Cardiac septum (tissue), 1 donor: ENCODE measurements at regions of chr11 and their contacts with region 1.

Region 1: GRCh38 chr11:130478204-130478701 is 29.8 kb downstream of the ADAMTS15 start:
- DNase-seq: no peak

Region 2: DNA sequence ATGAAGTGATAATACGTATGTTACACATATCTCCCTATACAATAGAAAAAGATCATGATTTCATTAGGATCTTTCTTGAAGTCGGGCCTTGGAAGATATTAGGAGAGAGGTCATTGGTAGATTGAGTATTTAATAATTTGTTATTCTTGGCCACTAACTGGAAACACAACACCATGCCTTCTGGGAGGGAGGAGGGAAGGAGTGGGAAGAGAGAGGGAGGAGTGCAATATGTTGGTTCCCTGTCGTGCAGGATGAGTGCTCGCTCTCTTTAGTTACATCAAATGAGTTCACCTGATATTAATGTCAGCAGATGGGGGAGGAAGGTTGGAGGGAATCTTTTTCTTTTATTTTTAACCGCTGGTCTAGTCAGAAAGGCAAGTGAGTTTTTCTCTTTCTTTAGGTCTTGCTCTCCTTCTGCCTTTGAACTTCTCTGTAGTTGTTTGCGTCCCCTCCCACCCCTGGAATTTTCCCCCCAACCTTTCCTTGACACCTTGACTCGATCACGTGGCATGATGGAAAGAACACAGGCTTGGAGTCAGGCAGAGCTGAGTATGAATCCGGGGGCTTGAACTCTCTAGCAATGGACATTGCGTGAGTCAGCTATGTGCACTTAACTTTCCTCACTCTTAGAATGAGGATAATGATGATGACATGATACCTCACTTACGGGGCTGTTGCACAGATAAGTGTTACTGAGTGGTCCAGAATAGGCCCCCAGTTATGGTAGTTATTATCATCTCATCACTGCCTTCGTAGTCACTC is 23.6 kb before region 1 on chr11:
- intact Hi-C with region 1: loop called (anchors 2 kb)
- DNase-seq: no peak

Region 3: DNA sequence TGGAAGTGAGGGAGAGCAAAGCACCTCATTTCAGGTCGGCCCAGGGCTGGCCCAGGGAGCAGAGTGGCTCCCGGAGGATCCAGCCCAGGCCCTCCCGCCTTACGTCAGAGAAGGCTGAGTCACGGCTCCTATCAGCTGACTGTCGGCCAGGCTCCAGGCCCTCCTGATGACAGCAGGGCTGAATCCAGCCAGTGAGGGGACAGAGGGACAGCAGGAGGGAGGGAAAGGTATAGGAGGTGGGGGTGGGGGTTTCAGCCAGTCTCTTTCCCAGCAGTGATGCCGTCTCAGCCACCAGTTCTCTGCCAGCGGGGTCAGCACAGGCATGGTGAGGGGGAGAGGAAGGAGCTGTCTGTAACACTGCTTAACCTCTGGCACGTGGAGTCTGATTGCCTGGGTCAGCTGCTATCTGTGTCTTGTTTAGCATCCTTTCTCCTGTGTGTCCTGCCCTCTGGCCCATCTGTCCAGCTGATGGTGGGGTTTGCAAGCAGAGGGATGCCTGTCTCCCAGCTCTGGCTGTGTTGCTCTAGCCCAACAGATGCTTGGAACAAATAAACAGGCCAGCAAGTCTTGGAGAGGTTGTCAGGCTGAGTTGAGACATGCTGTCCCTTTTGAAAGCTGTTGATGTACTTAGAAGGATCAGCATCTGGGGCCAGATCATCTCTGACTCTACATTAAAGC is 44.2 kb after region 1 on chr11:
- intact Hi-C with region 1: loop called (anchors 1 kb)
- DNase-seq: peak; percentile 95

Region 4: GRCh38 chr11:130677486-130678153 is 199.4 kb after region 1 on chr11:
- intact Hi-C with region 1: loop called (anchors 5 kb)
- DNase-seq: no peak